Activated naive CD4-positive, alpha-beta T cell treated with anti-CD3 and anti-CD28 coated beads for 36 hours (primary cell): ENCODE measurements at regions of chr5 and their contacts with region 1.

Region 1: DNA sequence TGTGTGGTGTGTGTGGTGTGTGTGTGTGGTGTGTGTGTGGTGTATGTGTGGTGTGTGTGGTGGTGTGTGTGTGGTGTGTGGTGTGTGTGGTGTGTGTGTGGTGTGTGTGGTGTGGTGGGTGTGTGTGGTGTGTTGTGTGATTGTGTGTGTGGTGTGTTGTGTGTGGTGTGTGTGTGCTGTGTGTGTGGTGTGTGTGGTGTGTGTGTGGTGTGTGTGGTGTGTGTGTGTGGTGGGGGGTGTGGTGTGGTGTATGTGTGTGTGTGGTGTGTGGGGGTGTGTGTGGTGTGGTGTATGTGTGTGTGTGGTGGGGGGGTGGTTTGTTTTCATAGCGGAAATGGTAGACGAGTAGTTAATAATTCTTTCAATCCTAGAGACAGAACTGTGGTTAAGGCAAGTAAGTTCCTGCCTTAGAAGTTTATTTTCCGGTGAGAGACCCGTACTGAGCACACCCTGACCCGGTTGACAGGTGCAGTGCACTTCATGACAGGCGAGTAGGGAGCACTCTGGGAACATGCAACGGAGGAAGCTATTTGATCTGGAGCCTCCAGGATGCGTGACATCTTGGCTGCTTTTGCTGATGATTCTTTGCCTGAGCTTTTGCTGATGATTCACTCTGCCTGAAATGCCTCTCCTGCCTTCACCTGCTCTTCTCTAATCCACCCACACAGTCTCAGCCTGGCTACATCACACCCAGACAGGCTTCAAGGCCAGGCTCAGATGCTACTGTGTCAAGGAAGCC is 21.7 kb upstream of the FAT2 start:
- DNase-seq: peak; percentile 82
- H3K4me3 Mint-ChIP-seq: no peak overlapping the region
- H3K27ac Mint-ChIP-seq: peak overlapping the region; percentile 80
- H3K4me1 Mint-ChIP-seq: peaks cover 39% of the 10 kb centered on the region
- H3K27me3 Mint-ChIP-seq: no peaks in the 10 kb centered on the region

Region 2: GRCh38 chr5:150789943-150790611 is 822.8 kb before region 1 on chr5:
- CTCF ChIA-PET with region 1: no interaction called
- intact Hi-C with region 1: loop called (anchors 1 kb)
- DNase-seq: peak; percentile 92
- H3K4me3 Mint-ChIP-seq: peak overlapping the region; percentile 64
- H3K27ac Mint-ChIP-seq: peak overlapping the region; percentile 97
- H3K4me1 Mint-ChIP-seq: peaks cover 65% of the 10 kb centered on the region
- H3K27me3 Mint-ChIP-seq: no peaks in the 10 kb centered on the region

Region 3: DNA sequence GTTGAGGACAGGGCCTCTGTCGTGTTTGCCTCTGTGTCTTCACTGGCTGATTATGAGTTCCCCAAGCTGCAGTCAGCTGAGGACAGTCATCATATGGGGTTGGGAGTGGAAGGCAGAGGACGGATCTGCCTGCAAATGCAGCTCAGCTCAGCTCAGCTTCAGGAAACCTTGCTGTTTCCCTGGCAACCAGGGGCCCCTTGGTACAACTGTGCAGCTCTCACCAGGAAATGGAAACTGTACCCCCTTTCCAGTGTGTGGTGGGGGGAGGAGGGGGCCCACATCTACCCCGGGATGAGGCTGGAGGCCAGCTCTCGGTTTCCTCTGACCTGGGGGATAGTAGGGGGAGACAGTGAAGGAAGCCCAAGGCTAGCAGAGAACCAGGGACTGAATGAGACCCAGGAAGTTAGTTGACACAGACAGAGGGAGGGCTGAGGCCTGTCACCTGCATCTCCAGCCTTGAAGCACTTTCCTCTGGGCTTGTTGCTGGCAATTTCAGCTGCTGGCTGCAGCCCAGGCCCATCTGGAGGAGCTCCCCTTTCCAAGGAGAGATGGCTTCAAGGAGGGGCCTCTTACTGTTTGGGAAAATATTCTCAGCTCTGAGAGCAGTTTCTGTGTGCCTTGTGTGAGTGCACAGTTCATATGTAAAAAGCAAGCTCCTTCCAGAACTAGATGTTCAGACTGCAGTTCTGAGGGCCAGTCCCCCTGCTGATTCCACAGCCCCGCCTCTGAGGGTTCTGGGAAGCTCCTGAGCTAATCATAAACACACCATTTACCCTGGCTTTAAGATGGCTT is 462.2 kb before region 1 on chr5:
- CTCF ChIA-PET with region 1: no interaction called
- intact Hi-C with region 1: loop called (anchors 2 kb)
- DNase-seq: peak; percentile 91
- H3K4me3 Mint-ChIP-seq: peak overlapping the region; percentile 64
- H3K27ac Mint-ChIP-seq: peak overlapping the region; percentile 90
- H3K4me1 Mint-ChIP-seq: peaks cover 94% of the 10 kb centered on the region
- H3K27me3 Mint-ChIP-seq: no peaks in the 10 kb centered on the region

Region 4: GRCh38 chr5:151569132-151570046 is 43.5 kb before region 1 on chr5:
- CTCF ChIA-PET with region 1: no interaction called
- intact Hi-C with region 1: loop called (anchors 1 kb)
- DNase-seq: peak; percentile 69
- H3K4me3 Mint-ChIP-seq: no peak overlapping the region
- H3K27ac Mint-ChIP-seq: no peak overlapping the region
- H3K4me1 Mint-ChIP-seq: peaks cover 9% of the 10 kb centered on the region
- H3K27me3 Mint-ChIP-seq: no peaks in the 10 kb centered on the region

Region 5: GRCh38 chr5:151651997-151652645 is 39.3 kb after region 1 on chr5:
- CTCF ChIA-PET with region 1: interaction called, 9 read pairs
- intact Hi-C with region 1: loop called (anchors 1 kb)
- DNase-seq: peak; percentile 88
- H3K4me3 Mint-ChIP-seq: no peak overlapping the region
- H3K27ac Mint-ChIP-seq: no peak overlapping the region
- H3K4me1 Mint-ChIP-seq: no peaks in the 10 kb centered on the region
- H3K27me3 Mint-ChIP-seq: no peaks in the 10 kb centered on the region